ENCODE measurements at regions of chr2 and their contacts with region 1.

Region 1: GRCh38 chr2:9525266-9525665 is 30.4 kb downstream of the ADAM17 start:
- DNase-seq: no peak
- ATAC-seq: no peak
- H3K4me3 ChIP-seq: no peak overlapping the region
- H3K4me3 Mint-ChIP-seq: no peak overlapping the region
- H3K27ac ChIP-seq: no peak overlapping the region
- H3K27ac Mint-ChIP-seq: no peak overlapping the region
- H3K4me1 ChIP-seq: no peaks in the 10 kb centered on the region
- H3K4me1 Mint-ChIP-seq: peaks cover 0 to 12% (median 4%) of the 10 kb centered on the region in 3 donors
- H3K27me3 ChIP-seq: no peaks in the 10 kb centered on the region
- H3K27me3 Mint-ChIP-seq: no peaks in the 10 kb centered on the region

Region 2: GRCh38 chr2:9398881-9399780 is 126.1 kb before region 1 on chr2:
- CTCF ChIA-PET with region 1: no interaction called
- POLR2A ChIA-PET with region 1: no interaction called
- DNase-seq: no peak
- ATAC-seq: no peak
- H3K4me3 ChIP-seq: no peak overlapping the region
- H3K4me3 Mint-ChIP-seq: no peak overlapping the region
- H3K27ac ChIP-seq: no peak overlapping the region
- H3K27ac Mint-ChIP-seq: no peak overlapping the region
- H3K4me1 ChIP-seq: peaks cover 0 to 5% of the 10 kb centered on the region in 2 experiments
- H3K4me1 Mint-ChIP-seq: peaks cover 5 to 9% (median 6%) of the 10 kb centered on the region in 3 donors
- H3K27me3 ChIP-seq: peaks cover 0 to 9% of the 10 kb centered on the region in 2 experiments
- H3K27me3 Mint-ChIP-seq: no peaks in the 10 kb centered on the region

Region 3: GRCh38 chr2:9508931-9509330 is 16.3 kb before region 1 on chr2:
- CTCF ChIA-PET with region 1: no interaction called
- POLR2A ChIA-PET with region 1: interaction called in 1 of 2 experiments, 11 read pairs
- DNase-seq: no peak
- ATAC-seq: no peak
- H3K4me3 ChIP-seq: no peak overlapping the region
- H3K4me3 Mint-ChIP-seq: no peak overlapping the region
- H3K27ac ChIP-seq: no peak overlapping the region
- H3K27ac Mint-ChIP-seq: no peak overlapping the region
- H3K4me1 ChIP-seq: no peaks in the 10 kb centered on the region
- H3K4me1 Mint-ChIP-seq: no peaks in the 10 kb centered on the region
- H3K27me3 ChIP-seq: no peaks in the 10 kb centered on the region
- H3K27me3 Mint-ChIP-seq: no peaks in the 10 kb centered on the region

Region 4: GRCh38 chr2:11348209-11348749 is 1823.0 kb after region 1 on chr2:
- CTCF ChIA-PET with region 1: no interaction called
- POLR2A ChIA-PET with region 1: no interaction called
- DNase-seq: no peak
- ATAC-seq: no peak
- H3K4me3 ChIP-seq: no peak overlapping the region
- H3K4me3 Mint-ChIP-seq: no peak overlapping the region
- H3K27ac ChIP-seq: no peak overlapping the region
- H3K27ac Mint-ChIP-seq: no peak overlapping the region
- H3K4me1 ChIP-seq: peaks cover 3 to 6% of the 10 kb centered on the region in 2 experiments
- H3K4me1 Mint-ChIP-seq: peaks cover 4 to 8% (median 6%) of the 10 kb centered on the region in 3 donors
- H3K27me3 ChIP-seq: no peaks in the 10 kb centered on the region
- H3K27me3 Mint-ChIP-seq: no peaks in the 10 kb centered on the region

Measured in T-cell (primary cell).